SK-N-SH (cell line): ENCODE measurements at regions of chr18 and their contacts with region 1.

Region 1: DNA sequence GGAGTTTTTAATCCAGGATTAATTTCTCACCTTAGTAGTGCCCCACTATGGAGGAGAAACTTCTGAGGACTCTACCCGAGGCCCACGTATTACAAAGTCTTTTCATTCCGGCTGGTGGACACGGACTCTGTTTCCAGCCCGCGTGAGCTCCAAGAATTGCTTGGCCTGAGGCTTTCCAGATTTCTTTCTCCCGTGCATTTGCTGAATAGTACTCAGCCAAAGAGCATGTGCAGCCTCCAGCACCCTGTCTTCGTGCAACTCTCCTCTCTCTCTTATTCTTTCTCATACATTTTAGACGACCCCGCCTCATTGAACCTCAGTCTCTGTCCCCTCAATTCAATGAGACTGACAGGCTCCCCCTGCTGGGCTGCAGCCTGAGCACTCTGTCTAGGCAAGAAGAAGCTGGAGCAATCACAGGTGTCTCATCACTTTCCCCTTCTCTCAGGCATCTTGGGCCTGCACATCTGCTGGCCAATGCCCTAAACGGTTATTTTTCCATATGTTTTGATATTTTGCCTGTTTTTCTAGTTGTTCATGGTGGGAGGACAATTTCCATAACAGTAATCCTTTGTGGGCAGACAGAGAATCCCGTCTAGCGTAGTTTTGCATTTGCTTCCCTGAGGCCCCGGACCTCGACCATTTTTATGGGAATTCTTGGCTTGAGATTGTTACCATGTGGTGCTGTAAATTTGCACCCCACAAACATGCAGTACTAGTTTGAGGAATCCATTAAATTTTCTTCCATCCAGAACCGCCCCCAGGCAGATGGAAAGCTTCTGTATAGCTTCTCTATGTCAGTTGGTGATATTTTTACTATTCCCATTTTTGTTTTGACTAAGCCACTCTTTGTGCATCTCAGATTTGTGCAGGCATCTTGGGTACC is 50.1 kb upstream of the LPIN2 start:
- DNase-seq: peak; percentile 63
- H3K4me3 ChIP-seq: no peak overlapping the region
- H3K27ac ChIP-seq: no peak overlapping the region
- H3K4me1 ChIP-seq: no peaks in the 10 kb centered on the region; a peak in 1 of 4 replicates
- H3K27me3 ChIP-seq: no peaks in the 10 kb centered on the region
- CTCF ChIP-seq: peak; percentile 75
- EP300 ChIP-seq: no peak
- RAD21 ChIP-seq: peak; percentile 71

Region 2: DNA sequence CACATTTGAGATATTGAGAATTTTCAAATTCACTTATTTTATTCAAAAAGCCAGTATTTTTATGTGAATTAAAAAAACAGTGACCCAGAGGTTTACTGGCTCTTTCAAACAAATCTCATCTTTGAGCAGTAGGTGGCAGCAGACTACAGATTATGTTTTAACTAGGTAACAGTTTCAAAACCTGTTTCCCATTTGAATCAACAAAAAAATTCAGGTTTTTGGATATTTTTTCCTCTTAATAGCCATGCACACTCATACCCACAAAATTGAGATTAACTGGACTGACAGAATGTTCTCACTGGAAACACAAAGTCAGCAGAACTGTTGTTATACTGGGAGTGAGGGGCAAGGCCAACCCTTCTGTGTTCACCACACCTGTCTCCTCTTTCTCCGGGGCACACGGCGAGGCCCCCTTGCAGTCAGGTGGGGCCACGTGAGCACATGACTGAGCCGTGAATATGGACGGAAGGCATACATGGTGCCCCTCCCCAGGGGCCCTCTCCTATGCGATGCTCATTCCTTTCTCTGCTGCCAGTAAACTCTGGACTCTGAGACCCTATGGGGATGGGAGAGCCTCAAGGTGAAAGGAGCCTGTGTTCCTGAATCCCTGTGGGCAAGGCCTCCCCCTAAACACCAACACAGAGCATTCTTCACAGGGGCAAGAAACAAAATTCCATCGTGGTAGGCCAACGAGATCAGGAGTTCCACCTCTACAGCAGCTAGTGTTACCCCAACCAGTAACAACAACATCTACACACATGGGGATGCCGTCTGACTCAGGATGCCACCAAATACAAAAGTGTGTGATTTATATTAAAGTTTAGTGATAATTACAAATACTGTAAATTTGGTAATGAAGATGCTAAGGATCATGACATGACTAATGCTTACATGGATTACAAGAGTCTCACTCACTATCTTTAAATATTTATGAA is 130.5 kb before region 1 on chr18:
- CTCF ChIA-PET with region 1: interaction called, 17 read pairs
- POLR2A ChIA-PET with region 1: no interaction called
- DNase-seq: peak; percentile 64
- H3K4me3 ChIP-seq: no peak overlapping the region; a peak in 1 of 4 replicates
- H3K27ac ChIP-seq: no peak overlapping the region; a peak in 1 of 4 replicates
- H3K4me1 ChIP-seq: no peaks in the 10 kb centered on the region; a peak in 1 of 4 replicates
- H3K27me3 ChIP-seq: no peaks in the 10 kb centered on the region
- CTCF ChIP-seq: peak; percentile 86
- EP300 ChIP-seq: no peak
- RAD21 ChIP-seq: peak; percentile 89

Region 3: DNA sequence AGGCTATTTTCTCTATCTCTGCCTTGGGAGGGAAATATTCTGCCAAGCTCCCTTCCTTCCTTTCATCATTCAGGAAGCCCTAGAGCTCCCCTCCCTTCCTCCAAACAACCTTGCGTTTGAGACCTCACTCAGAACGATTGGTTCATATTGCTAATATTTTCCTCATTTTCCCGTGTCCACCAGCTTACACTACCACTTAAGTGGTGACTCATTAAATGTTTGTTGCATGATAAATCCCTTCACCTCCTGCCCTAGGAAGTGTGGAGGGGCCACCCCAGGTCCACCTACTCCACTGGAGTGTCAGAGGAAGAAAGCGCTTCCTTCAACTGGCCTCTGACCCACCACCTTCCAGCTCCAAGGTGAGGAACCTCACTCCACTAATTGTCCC is 47.8 kb before region 1 on chr18:
- CTCF ChIA-PET with region 1: interaction called, 15 read pairs
- POLR2A ChIA-PET with region 1: no interaction called
- DNase-seq: no peak
- H3K4me3 ChIP-seq: no peak overlapping the region
- H3K27ac ChIP-seq: peak overlapping the region in 1 of 2 experiments; percentile 64; a peak in 3 of 4 replicates
- H3K4me1 ChIP-seq: peaks cover 6 to 32% of the 10 kb centered on the region in 2 experiments
- H3K27me3 ChIP-seq: no peaks in the 10 kb centered on the region
- CTCF ChIP-seq: no peak
- EP300 ChIP-seq: peak in 1 of 2 experiments; percentile 59; a peak in 1 of 4 replicates
- RAD21 ChIP-seq: no peak

Region 4: DNA sequence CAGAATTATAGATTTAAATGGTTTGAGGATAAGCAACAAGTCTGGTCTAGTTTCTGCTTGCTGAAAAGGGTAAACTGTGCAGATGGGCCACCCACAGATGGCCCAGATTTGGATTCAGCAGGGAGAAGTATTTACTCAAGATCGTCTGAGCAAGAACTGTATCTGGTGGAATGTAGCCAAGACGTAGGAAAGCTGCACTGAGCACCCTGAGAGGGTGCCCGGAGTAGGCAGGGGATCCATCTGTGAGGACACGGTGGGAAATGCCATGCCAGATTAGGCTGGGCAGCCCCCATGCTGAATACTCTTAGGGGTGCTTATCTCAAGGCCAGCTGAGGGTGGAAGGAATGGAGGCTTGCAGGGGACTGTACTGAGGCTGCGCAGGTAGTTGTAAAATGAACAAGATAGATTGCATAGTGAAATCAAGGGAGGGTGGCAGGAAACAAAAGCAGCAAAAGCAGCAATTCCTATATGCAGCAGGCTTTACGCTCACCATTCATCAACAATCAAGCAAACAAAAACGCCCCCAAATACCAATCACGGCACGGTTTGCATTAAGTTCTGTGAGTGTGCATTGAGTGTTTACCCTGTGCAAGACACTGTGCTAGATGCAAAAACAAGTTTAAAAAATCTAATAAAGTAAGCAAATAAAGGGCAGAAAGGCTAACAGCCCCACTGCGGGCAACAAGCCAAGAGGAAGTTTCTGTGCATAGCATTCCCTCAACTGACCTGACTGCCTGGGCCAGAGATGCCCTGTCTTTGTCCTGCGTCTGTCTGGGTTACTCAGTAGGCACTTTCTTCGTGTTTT is 17.9 kb before region 1 on chr18:
- CTCF ChIA-PET with region 1: interaction called, 18 read pairs
- POLR2A ChIA-PET with region 1: no interaction called
- DNase-seq: no peak
- H3K4me3 ChIP-seq: no peak overlapping the region
- H3K27ac ChIP-seq: no peak overlapping the region
- H3K4me1 ChIP-seq: peaks cover 0 to 9% of the 10 kb centered on the region in 2 experiments; a peak in 1 of 4 replicates
- H3K27me3 ChIP-seq: no peaks in the 10 kb centered on the region
- CTCF ChIP-seq: no peak
- EP300 ChIP-seq: no peak
- RAD21 ChIP-seq: no peak

Region 5: DNA sequence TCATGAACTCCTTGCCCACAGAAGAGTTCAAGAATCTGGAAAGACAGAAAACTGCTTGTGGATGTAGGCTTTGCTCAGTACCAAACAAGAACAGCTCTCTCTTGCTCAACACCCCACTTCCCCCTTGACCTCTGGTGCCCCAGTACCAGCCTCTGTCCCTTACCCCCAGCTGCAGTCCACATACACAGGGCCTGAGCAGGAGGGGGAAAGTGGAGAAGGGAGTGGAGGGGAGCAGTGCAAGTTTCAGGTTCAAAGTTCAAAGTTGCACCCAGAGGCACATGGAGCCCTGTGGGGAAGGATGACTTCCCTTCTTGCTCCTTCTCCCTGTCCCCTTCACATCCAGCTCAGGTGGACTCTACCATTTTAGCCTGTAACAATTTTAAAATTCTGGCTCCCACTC is 11.0 kb after region 1 on chr18:
- CTCF ChIA-PET with region 1: interaction called, 70 read pairs
- POLR2A ChIA-PET with region 1: no interaction called
- DNase-seq: no peak
- H3K4me3 ChIP-seq: no peak overlapping the region
- H3K27ac ChIP-seq: no peak overlapping the region
- H3K4me1 ChIP-seq: no peaks in the 10 kb centered on the region; a peak in 1 of 4 replicates
- H3K27me3 ChIP-seq: no peaks in the 10 kb centered on the region
- CTCF ChIP-seq: no peak
- EP300 ChIP-seq: no peak
- RAD21 ChIP-seq: no peak